ENCODE measurements at regions of chr3 and their contacts with region 1.

Region 1: GRCh38 chr3:151142929-151143328 is 57.5 kb downstream of the MED12L start:
- DNase-seq: no peak
- ATAC-seq: no peak
- H3K4me3 ChIP-seq: no peak overlapping the region
- H3K4me3 Mint-ChIP-seq: no peak overlapping the region
- H3K27ac ChIP-seq: no peak overlapping the region
- H3K27ac Mint-ChIP-seq: no peak overlapping the region
- H3K4me1 ChIP-seq: peaks cover 0 to 6% of the 10 kb centered on the region in 2 experiments
- H3K4me1 Mint-ChIP-seq: peaks cover 0 to 5% (median 0%) of the 10 kb centered on the region in 3 donors
- H3K27me3 ChIP-seq: peaks cover 0 to 5% of the 10 kb centered on the region in 2 experiments
- H3K27me3 Mint-ChIP-seq: peaks cover 10 to 13% of the 10 kb centered on the region in 2 donors

Region 2: GRCh38 chr3:151086484-151087456 is 56.2 kb before region 1 on chr3:
- CTCF ChIA-PET with region 1: interaction called in 1 of 2 experiments, 10 read pairs
- POLR2A ChIA-PET with region 1: no interaction called
- DNase-seq: peak; percentile 25 to 76 (median 56)
- ATAC-seq: peak; percentile 78 to 93 (median 82)
- H3K4me3 ChIP-seq: peak overlapping the region; percentile 46 to 82
- H3K4me3 Mint-ChIP-seq: peak overlapping the region; percentile 81 to 84 (median 82)
- H3K27ac ChIP-seq: no peak overlapping the region
- H3K27ac Mint-ChIP-seq: peak overlapping the region in 1 of 2 donors; percentile 7
- H3K4me1 ChIP-seq: peaks cover 0 to 20% of the 10 kb centered on the region in 2 experiments
- H3K4me1 Mint-ChIP-seq: peaks cover 0 to 15% (median 13%) of the 10 kb centered on the region in 3 donors
- H3K27me3 ChIP-seq: peaks cover 2 to 26% of the 10 kb centered on the region in 2 experiments
- H3K27me3 Mint-ChIP-seq: peaks cover 18 to 43% of the 10 kb centered on the region in 2 donors